Left lung (tissue), 14 donors: ENCODE measurements at regions of chr4 and their contacts with region 1.

Region 1: GRCh38 chr4:20684852-20685763 is 15.2 kb upstream of the PACRGL start:
- DNase-seq: peak in 2 of 4 donors; percentile 51
- ATAC-seq: peak; percentile 57
- H3K4me3 ChIP-seq: no peak overlapping the region
- H3K27ac ChIP-seq: peak overlapping the region in 1 of 2 donors; percentile 9
- H3K4me1 ChIP-seq: no peaks in the 10 kb centered on the region
- H3K27me3 ChIP-seq: no peaks in the 10 kb centered on the region
- CTCF ChIP-seq: peak; percentile 47 to 59

Region 2: DNA sequence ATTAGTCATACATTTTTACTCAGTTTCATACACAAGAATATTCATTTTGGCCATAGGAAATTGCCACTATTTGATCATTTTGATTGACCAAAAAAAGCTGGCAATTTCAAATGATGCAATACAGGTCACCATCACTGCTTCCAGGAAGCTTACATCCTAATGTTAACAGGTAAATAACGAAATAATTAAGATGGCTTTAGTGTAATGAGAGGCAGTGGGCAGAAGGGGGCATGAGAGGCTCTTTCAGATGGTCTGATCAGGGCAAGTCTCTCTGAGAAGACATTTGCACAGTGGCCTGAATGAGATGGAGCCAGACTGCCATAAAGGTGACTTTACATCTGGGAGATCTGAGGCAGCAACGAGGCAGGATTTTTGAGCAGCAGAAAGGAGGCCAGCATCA is 262.7 kb before region 1 on chr4:
- intact Hi-C with region 1: loop called in 1 of 2 experiments (anchors 10 kb)
- DNase-seq: peak in 2 of 4 donors; percentile 34 to 47
- ATAC-seq: peak; percentile 86
- H3K4me3 ChIP-seq: no peak overlapping the region
- H3K27ac ChIP-seq: no peak overlapping the region
- H3K4me1 ChIP-seq: peaks cover 0 to 3% of the 10 kb centered on the region in 2 donors
- H3K27me3 ChIP-seq: no peaks in the 10 kb centered on the region
- CTCF ChIP-seq: peak; percentile 25 to 41

Region 3: GRCh38 chr4:20554134-20554533 is 131.0 kb before region 1 on chr4:
- intact Hi-C with region 1: no loop called
- DNase-seq: no peak
- ATAC-seq: no peak
- H3K4me3 ChIP-seq: no peak overlapping the region
- H3K27ac ChIP-seq: no peak overlapping the region
- H3K4me1 ChIP-seq: no peaks in the 10 kb centered on the region
- H3K27me3 ChIP-seq: no peaks in the 10 kb centered on the region
- CTCF ChIP-seq: no peak